SK-N-SH (cell line): ENCODE measurements at regions of chr1 and their contacts with region 1.

Region 1: DNA sequence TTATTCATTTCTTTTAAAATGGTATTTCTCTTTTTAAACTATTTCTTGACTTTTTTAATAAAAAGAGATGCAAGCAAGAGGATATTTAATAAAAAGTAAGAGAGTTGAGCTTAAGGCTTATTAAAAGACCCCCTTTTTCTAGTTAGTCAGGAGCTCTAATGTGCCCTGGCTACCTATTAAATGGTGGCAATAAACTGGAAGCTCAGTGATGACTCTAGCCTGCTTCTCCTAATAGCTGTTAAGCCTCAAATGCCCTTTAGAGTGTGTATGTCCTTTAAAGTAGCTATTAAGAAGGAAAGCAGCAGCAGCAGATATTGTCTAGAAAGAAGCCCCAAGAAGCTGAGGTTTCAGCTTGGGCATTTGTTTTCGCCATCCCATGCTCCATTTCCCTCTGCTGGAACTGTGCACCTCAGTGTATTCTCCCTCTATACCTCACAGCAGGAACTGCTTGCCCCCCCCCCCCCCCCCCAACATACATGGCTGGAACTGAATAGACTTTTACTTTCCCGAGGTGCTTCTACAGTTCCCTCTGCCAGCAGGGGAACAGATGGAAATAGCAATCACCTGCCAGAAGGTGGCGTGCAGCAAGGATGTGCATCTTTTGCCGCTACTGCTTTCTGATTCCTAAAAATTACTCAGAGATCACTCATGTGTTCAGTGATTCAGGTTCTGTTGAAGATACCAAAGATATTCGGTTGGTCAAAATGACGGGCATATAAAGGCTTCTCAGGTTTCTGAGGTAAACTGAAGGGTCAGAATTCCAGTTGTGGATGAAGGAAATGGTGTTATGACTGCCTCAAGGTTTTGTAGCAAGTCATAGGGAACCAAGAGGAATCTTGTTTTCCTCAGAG is 2.5 kb downstream of the RGS4 start:
- DNase-seq: peak; percentile 44
- H3K4me3 ChIP-seq: peak overlapping the region; percentile 69 to 82
- H3K27ac ChIP-seq: peak overlapping the region; percentile 91 to 99
- H3K4me1 ChIP-seq: peaks cover 36 to 37% of the 10 kb centered on the region in 2 experiments; a peak in 3 of 4 replicates
- H3K27me3 ChIP-seq: no peaks in the 10 kb centered on the region
- CTCF ChIP-seq: peak; percentile 74
- EP300 ChIP-seq: peak in 1 of 2 experiments; percentile 36; a peak in 1 of 4 replicates
- RAD21 ChIP-seq: peak; percentile 74

Region 2: GRCh38 chr1:162854245-162854882 is 217.3 kb before region 1 on chr1:
- CTCF ChIA-PET with region 1: interaction called, 13 read pairs
- POLR2A ChIA-PET with region 1: no interaction called
- DNase-seq: peak; percentile 66
- H3K4me3 ChIP-seq: no peak overlapping the region; a peak in 1 of 4 replicates
- H3K27ac ChIP-seq: peak overlapping the region; percentile 58 to 92; a peak in 3 of 4 replicates
- H3K4me1 ChIP-seq: peaks cover 8 to 43% of the 10 kb centered on the region in 2 experiments; a peak in 3 of 4 replicates
- H3K27me3 ChIP-seq: no peaks in the 10 kb centered on the region
- CTCF ChIP-seq: peak; percentile 94
- EP300 ChIP-seq: no peak
- RAD21 ChIP-seq: peak; percentile 85

Region 3: DNA sequence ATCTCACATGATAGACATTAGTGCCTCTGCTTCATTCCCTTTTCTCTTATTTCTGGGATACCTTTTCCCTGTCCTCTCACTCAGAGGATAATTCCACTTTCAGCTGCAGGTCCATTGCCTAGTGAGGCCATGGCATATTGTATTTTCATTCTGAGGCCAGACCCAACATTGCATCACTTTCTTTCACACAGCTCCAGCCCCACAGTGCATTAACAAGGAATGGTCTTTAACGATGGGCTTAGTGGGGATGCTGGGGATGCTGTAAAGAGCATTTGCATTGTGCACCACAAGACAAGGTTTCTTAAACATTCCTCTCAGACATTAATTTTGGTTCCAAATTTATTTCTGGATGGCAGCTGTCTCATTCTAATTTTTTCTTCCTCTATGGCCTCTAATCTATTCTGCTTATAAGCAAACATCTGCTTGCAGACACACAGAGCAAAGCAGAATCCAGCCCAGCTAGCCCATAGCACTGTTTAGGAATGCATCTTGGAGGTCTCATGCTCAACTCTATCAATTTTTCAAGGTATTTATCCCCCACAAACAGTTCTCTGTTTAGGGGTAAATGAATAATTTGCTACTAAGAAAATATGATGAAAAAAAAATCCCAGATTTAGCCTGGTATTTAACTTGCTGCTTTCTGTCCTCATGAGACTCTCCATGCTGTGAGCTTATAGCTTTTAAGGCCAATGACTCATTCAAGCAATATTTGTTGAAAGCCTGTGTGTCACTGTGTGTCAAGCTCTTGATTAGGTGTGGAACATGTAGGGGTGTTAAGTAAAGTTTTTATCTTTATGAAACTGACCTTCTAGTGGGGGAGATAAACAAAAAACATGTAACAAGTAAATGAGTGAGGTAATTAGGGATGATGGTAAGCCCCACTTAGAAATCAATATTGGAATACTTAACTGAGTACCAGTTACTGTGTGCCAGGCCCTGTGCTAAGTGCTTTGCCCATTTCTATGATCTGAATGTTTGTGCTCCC is 166.2 kb before region 1 on chr1:
- CTCF ChIA-PET with region 1: interaction called, 14 read pairs
- POLR2A ChIA-PET with region 1: interaction called, 5 read pairs
- DNase-seq: no peak
- H3K4me3 ChIP-seq: no peak overlapping the region
- H3K27ac ChIP-seq: peak overlapping the region; percentile 91 to 99
- H3K4me1 ChIP-seq: peaks cover 28 to 50% of the 10 kb centered on the region in 2 experiments
- H3K27me3 ChIP-seq: no peaks in the 10 kb centered on the region
- CTCF ChIP-seq: no peak
- EP300 ChIP-seq: peak; percentile 22 to 67; a peak in 2 of 4 replicates
- RAD21 ChIP-seq: no peak

Region 4: DNA sequence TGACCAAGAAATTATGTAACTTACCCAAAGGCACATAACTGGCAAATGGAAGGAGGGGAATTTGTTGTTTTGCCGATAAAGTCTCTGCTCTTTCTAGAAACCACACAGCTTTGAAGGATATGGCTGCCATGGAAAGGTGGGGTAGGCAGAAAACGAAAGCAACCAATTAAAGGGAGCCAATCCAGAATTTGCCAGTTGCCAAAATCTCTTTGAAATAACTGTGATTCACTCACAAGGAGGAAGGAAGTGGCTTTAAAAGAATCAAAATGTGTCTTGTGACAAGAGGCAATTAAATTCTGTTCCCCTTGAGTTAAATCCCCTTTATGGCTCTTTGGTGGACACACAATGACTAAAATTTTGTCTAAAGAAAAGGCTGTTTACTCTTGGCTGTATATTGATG is 149.4 kb before region 1 on chr1:
- CTCF ChIA-PET with region 1: interaction called, 20 read pairs
- POLR2A ChIA-PET with region 1: interaction called, 300 read pairs
- DNase-seq: no peak
- H3K4me3 ChIP-seq: no peak overlapping the region
- H3K27ac ChIP-seq: peak overlapping the region in 1 of 2 experiments; percentile 99; a peak in 2 of 4 replicates
- H3K4me1 ChIP-seq: peaks cover 0 to 56% of the 10 kb centered on the region in 2 experiments; a peak in 3 of 4 replicates
- H3K27me3 ChIP-seq: no peaks in the 10 kb centered on the region
- CTCF ChIP-seq: no peak
- EP300 ChIP-seq: no peak
- RAD21 ChIP-seq: no peak

Region 5: DNA sequence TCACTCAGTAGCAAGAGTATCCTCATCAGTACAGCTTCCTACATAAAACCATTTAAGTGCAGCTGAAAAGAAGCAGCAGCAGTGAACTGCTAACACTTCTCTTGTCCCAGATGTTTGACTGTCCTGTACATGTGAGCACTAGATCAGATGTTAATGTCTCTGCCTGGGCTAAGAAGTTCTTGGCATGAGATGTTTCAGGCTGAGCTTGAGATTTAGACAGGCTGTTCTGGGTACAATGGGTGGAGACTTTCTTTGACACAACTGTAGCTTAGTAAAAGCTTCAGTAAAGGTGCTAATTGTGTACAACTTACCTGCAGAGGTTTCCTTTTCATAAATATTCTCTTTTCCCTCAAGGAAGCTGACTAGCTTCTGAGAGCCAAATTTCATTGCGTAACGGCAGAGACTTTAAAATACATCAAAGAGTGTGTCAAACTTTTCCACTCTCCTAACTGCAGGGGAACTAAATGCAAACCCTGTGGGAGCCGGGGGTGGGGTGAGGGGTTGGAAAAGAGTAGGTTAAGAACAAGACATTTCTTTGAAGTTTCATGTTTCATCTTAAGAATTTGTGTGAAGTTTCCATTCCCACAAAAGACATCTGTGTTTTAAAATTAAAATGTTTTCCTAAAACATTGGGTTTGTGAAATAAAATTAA is 128.6 kb before region 1 on chr1:
- CTCF ChIA-PET with region 1: interaction called, 8 read pairs
- POLR2A ChIA-PET with region 1: interaction called, 34 read pairs
- DNase-seq: no peak
- H3K4me3 ChIP-seq: no peak overlapping the region
- H3K27ac ChIP-seq: peak overlapping the region in 1 of 2 experiments; percentile 75; a peak in 2 of 4 replicates
- H3K4me1 ChIP-seq: peaks cover 9 to 36% of the 10 kb centered on the region in 2 experiments; a peak in 3 of 4 replicates
- H3K27me3 ChIP-seq: no peaks in the 10 kb centered on the region
- CTCF ChIP-seq: no peak
- EP300 ChIP-seq: no peak
- RAD21 ChIP-seq: no peak

Region 6: DNA sequence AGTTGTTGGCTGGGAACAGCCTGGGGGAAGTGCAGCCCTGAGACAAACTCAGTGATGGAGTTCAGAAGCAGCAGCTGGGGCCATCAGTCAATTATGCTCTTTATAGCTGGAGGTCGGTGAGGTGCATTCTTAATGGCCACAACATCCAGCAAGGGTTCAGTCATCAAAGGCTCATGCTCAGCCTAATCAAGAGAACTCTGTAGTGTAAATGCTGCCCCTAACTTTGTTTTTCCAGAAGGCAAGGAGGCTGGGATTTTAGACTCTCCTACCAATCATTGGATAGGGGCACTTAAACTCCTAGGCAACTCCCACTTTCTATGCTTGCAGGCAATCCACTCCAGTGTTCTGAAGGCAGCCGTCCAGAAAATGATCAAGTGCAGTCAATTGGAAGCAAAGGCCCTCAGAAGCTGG is 17.4 kb before region 1 on chr1:
- CTCF ChIA-PET with region 1: interaction called, 10 read pairs
- POLR2A ChIA-PET with region 1: interaction called, 12 read pairs
- DNase-seq: no peak
- H3K4me3 ChIP-seq: no peak overlapping the region
- H3K27ac ChIP-seq: no peak overlapping the region
- H3K4me1 ChIP-seq: peaks cover 10% of the 10 kb centered on the region in 2 experiments; a peak in 3 of 4 replicates
- H3K27me3 ChIP-seq: no peaks in the 10 kb centered on the region
- CTCF ChIP-seq: no peak
- EP300 ChIP-seq: no peak
- RAD21 ChIP-seq: no peak

Region 7: DNA sequence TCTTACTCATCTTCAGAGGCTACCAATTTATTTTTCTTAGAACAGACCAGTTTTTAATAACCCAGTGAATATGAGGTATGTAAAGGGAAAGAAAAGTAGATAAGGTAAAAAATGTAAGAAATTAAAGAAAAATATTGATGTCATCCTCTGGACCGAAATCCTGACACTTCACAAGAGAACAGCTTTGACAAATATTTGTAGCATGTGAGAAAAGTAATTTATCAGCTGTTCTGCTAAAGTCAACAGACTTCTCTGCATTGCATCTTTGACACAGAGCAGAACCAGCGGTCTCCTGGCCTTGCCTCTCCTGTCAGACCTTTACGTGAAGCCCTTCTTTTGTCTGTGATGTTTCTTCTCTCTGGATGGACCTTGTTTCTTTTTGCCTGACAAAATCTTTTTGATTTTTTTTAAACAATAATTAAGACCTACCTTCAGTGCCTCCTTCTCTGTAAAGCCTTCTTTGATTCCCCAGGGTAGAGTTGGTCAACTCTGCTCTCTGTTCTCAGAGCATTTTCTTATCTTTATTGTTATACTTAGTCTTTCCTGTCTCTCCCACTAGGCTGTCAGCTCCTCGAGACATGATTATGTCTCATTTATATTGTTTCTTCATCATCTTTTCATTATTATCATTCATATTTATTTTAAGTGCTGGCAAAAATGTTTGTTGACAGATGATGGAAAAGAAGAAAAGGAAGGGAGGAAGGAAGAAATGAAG is 32.9 kb after region 1 on chr1:
- CTCF ChIA-PET with region 1: no interaction called
- POLR2A ChIA-PET with region 1: no interaction called
- DNase-seq: no peak
- H3K4me3 ChIP-seq: no peak overlapping the region
- H3K27ac ChIP-seq: peak overlapping the region; percentile 7 to 36; a peak in 3 of 4 replicates
- H3K4me1 ChIP-seq: peaks cover 9 to 18% of the 10 kb centered on the region in 2 experiments; a peak in 3 of 4 replicates
- H3K27me3 ChIP-seq: no peaks in the 10 kb centered on the region
- CTCF ChIP-seq: no peak
- EP300 ChIP-seq: no peak
- RAD21 ChIP-seq: no peak

Region 8: DNA sequence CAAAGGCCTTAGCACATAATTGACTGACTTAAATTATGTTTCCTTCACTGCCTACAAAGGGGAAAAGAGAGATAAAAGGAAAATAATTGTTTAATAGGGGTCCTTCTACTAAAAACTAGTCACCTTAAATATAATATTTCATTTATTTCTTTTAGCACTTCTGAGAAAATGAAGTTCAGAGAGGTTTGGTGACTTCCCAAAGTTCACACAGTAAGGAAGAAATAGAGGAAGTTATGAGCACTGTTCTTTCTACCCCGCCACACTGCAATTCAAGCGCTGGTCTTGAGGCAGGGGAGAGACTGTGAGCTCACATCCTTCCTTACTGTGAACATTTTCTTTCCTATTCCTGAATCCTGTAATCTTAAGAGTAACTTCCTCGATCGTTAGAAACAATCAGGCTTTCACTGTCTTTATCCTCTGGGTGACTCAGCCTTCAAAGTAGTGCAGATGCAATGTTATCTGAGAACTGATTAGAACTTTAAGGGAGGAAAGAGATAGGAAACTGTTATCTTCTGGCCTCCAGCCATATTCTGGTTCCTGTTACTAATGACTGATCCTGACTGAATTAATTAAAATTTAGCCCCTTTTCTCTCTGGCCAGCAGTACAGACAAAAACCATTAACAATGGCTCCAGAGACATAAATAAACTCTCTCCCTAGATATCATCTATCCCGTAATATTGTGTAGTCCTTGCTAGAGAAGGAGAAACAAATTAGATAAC is 124.3 kb after region 1 on chr1:
- CTCF ChIA-PET with region 1: interaction called, 10 read pairs
- POLR2A ChIA-PET with region 1: interaction called, 8 read pairs
- DNase-seq: no peak
- H3K4me3 ChIP-seq: peak overlapping the region; percentile 47 to 62
- H3K27ac ChIP-seq: peak overlapping the region; percentile 79 to 99
- H3K4me1 ChIP-seq: peaks cover 5 to 56% of the 10 kb centered on the region in 2 experiments; a peak in 2 of 4 replicates
- H3K27me3 ChIP-seq: no peaks in the 10 kb centered on the region
- CTCF ChIP-seq: no peak
- EP300 ChIP-seq: peak; percentile 82 to 100
- RAD21 ChIP-seq: 0 out of 2 replicates have a peak, but pooled peaks have one; percentile 3